Activated naive CD8-positive, alpha-beta T cell treated with anti-CD3 and anti-CD28 coated beads, Interleukin-2, amount 10 ng/mL, durations not matched to agents 7 days and 5 days (primary cell): ENCODE measurements at regions of chr17 and their contacts with region 1.

Region 1: DNA sequence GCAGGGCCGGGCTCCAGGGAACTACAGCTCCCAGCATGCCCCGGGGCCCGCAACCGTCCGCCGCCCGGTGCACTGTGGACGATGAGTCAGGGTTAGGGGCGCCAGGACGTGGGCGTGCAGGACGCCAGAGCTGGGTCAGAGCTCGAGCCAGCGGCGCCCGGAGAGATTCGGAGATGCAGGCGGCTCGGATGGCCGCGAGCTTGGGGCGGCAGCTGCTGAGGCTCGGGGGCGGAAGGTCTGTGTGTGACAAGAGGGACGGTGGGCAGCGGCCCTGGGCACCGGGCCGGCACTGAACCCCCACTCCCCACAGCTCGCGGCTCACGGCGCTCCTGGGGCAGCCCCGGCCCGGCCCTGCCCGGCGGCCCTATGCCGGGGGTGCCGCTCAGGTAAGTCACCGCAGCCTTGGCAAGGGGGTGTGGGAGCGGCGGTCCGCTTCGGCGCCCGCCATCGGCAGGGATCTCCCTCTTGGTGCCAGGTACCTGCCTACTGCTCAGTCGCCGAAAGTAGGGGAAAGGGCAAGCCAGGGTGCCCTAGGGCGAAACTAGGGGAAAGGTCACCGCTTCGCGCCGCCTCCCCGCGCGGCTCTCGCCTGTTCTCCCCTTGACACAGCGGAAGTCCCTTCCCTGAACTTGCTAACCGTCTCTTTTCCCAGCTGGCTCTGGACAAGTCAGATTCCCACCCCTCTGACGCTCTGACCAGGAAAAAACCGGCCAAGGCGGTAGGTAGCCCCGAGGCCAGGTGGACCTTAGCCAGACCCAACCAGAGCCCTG is at the starts of genes ACADVL and DLG4:
- DNase-seq: peak; percentile 82
- ATAC-seq: peak; percentile 74
- H3K4me3 Mint-ChIP-seq: peak within 1 kb of the TSS; percentile 97
- H3K27ac Mint-ChIP-seq: peak within 1 kb of the TSS; percentile 95
- H3K4me1 Mint-ChIP-seq: peaks cover 42% of the 10 kb centered on the region
- H3K27me3 Mint-ChIP-seq: no peaks in the 10 kb centered on the region
- total RNA-seq, gene ACADVL: 417 to 434 TPM
- total RNA-seq, gene DLG4: 21.2 to 22.4 TPM

Region 2: DNA sequence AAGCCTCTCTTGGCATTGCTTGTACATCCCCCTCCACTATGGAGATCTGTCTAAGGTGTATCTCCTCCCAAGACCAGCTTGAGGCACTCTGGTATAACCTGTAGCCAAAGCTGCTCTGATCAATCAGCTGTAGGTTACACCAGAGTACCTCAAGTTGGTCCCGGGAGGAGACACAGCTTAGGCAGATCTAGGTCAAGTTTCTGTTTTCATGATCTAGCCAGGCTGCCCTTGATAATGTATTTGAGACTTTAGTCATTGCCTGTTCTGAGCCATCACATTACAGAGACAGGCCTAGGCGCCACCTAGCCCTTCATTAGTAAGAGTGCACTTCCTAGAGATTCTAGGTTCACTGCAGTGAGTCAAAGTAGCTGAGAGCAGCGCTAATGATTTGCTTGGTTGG is 72.2 kb before region 1 on chr17:
- POLR2A ChIA-PET with region 1: no interaction called
- DNase-seq: no peak
- ATAC-seq: peak; percentile 47
- H3K4me3 Mint-ChIP-seq: no peak overlapping the region
- H3K27ac Mint-ChIP-seq: no peak overlapping the region
- H3K4me1 Mint-ChIP-seq: no peaks in the 10 kb centered on the region
- H3K27me3 Mint-ChIP-seq: peaks cover 7% of the 10 kb centered on the region

Region 3: GRCh38 chr17:7252176-7253043 is 32.4 kb after region 1 on chr17 and contains the start of gene ELP5:
- POLR2A ChIA-PET with region 1: interaction called, 18 read pairs
- DNase-seq: peak; percentile 91
- ATAC-seq: peak; percentile 66
- H3K4me3 Mint-ChIP-seq: peak within 1 kb of the TSS; percentile 99
- H3K27ac Mint-ChIP-seq: peak within 1 kb of the TSS; percentile 100
- H3K4me1 Mint-ChIP-seq: peaks cover 39% of the 10 kb centered on the region
- H3K27me3 Mint-ChIP-seq: no peaks in the 10 kb centered on the region
- total RNA-seq, gene ELP5: 49.5 to 52.0 TPM